Natural killer cell (primary cell): ENCODE measurements at regions of chr2 and their contacts with region 1.

Region 1: GRCh38 chr2:147989809-147990403 is 30.6 kb downstream of the ORC4 start:
- DNase-seq: peak in 1 of 2 donors; percentile 71
- ATAC-seq: peak; percentile 70 to 94 (median 84)
- H3K4me3 ChIP-seq: no peak overlapping the region
- H3K4me3 Mint-ChIP-seq: no peak overlapping the region
- H3K27ac ChIP-seq: no peak overlapping the region
- H3K27ac Mint-ChIP-seq: peak overlapping the region; percentile 48 to 68
- H3K4me1 ChIP-seq: no peaks in the 10 kb centered on the region
- H3K4me1 Mint-ChIP-seq: peaks cover 24 to 42% of the 10 kb centered on the region in 2 donors
- H3K27me3 ChIP-seq: no peaks in the 10 kb centered on the region
- H3K27me3 Mint-ChIP-seq: no peaks in the 10 kb centered on the region
- CTCF ChIP-seq: peak; percentile 67

Region 2: DNA sequence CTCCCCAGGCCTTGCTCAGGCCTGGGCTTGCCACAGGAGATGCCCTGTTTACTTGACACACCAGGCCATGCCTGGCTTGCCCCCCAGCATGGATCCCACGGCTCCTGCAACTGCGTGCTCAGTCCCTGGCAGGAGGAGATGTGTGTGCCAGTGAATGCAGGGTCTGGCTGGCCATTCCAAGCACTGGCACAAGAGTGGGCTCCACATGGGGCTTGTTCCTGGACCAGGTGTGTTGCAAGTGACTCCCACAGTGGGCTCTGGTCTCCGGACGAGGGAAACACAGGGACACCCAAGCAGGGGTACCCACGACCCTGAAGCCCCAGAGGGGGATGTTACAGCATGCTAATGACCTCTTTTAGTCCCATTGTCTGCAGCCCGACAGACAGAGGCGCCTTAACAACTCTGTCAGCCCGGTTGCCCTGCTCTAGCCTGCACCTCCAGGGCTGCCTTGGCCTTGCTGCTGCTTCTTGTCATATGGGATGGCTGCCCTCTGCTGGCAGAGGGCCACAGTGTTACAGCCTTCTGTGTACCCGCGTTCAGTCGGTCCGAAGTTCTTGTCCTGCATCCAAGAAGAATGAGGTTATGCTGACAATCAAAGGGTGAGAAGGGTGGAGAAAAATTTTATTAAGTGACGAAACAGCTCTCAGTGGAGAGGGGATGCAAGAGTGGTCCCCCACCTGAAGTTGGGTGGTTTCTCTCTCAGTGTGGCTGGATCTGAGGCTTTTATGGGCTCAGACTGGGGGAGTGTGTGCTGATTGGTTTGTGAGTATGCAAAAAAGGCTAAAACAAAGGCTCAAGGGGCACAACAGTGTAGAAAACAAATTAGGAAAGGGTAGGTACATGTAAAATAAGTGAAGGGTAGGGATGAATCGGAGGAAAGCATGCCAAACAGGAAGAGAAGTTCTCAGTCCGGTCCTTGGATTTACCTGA is 211.4 kb after region 1 on chr2:
- intact Hi-C with region 1: loop called (anchors 1 kb)
- DNase-seq: peak; percentile 20 to 62
- ATAC-seq: peak; percentile 46 to 70 (median 63)
- H3K4me3 ChIP-seq: no peak overlapping the region
- H3K4me3 Mint-ChIP-seq: no peak overlapping the region
- H3K27ac ChIP-seq: no peak overlapping the region
- H3K27ac Mint-ChIP-seq: no peak overlapping the region
- H3K4me1 ChIP-seq: no peaks in the 10 kb centered on the region
- H3K4me1 Mint-ChIP-seq: peaks cover 0 to 9% of the 10 kb centered on the region in 2 donors
- H3K27me3 ChIP-seq: no peaks in the 10 kb centered on the region
- H3K27me3 Mint-ChIP-seq: no peaks in the 10 kb centered on the region
- CTCF ChIP-seq: no peak

Region 3: DNA sequence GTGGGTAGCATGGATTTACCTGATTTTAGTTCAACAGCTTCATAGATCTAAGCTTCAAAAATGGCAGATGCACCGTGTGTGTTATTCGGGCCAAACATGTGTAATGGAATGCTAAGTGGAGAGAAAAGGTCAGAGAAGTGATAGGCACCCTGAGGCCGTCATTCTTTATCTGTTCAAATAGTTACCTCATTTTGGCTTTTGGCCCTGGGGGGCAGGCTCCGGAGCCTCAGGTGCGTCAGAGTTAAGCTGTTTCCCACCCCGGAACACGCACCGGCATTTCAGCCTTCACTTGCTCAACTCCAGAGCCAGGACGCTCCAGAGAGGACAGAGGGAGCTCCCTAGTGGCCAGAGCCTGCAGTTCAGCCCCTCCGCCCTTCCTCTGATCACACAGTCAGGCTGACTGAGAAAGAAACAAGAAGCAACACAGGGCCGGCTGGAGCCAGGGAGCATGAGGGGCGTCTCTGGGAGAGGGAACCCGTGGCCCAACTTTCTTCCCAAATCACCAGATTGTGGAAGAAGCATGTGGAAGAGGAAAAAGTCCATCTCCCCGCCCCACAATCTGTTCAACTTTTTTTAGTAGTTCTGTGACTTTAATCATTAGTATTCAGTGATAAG is 519.5 kb after region 1 on chr2:
- intact Hi-C with region 1: loop called (anchors 1 kb)
- DNase-seq: peak; percentile 67 to 89
- ATAC-seq: peak; percentile 97 to 100 (median 100)
- H3K4me3 ChIP-seq: peak overlapping the region; percentile 8
- H3K4me3 Mint-ChIP-seq: peak overlapping the region; percentile 49
- H3K27ac ChIP-seq: no peak overlapping the region
- H3K27ac Mint-ChIP-seq: peak overlapping the region in 1 of 2 donors; percentile 51
- H3K4me1 ChIP-seq: peaks cover 5% of the 10 kb centered on the region
- H3K4me1 Mint-ChIP-seq: peaks cover 8 to 10% of the 10 kb centered on the region in 2 donors
- H3K27me3 ChIP-seq: no peaks in the 10 kb centered on the region
- H3K27me3 Mint-ChIP-seq: no peaks in the 10 kb centered on the region
- CTCF ChIP-seq: peak; percentile 78

Region 4: DNA sequence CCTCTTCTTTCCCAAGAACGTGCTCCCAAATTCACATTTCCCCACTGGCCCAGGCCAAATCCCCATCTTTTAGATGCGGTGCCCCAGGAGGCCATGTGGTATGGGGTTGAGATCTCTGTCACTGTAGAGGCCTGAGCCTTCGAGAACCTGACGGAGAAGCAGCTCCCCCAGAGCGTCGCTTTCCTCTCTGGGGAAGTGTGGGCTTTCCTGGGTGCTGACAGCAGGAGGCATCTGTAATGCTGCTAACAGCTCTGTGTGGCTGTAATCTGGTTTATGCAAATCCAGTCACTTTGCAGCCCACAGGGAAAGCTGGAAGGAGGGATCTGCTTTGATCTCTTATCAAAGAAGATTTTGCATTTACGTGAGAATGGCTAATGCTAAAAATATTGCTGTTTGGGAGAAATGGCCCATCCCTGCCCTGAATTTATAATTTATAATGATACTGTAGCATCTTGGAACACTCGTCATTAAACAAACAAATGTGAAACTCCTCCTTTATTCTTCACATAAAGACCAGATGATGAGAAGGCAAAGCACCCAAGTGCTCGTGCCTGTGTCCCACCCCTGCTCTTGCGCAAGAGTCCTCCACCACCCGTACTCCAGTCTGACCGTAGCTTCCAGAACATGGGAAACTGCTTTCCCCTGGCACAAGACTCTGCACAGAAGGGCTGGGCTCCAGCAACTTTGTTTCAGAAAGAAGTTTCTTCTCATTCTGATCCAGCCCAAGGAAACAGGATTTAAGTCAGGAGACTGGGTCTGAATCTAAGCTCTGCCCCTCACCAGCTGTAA is 544.7 kb after region 1 on chr2:
- intact Hi-C with region 1: no loop called
- DNase-seq: no peak
- ATAC-seq: no peak
- H3K4me3 ChIP-seq: no peak overlapping the region
- H3K4me3 Mint-ChIP-seq: no peak overlapping the region
- H3K27ac ChIP-seq: no peak overlapping the region
- H3K27ac Mint-ChIP-seq: no peak overlapping the region
- H3K4me1 ChIP-seq: no peaks in the 10 kb centered on the region
- H3K4me1 Mint-ChIP-seq: peaks cover 0 to 5% of the 10 kb centered on the region in 2 donors
- H3K27me3 ChIP-seq: no peaks in the 10 kb centered on the region
- H3K27me3 Mint-ChIP-seq: peaks cover 0 to 4% of the 10 kb centered on the region in 2 donors
- CTCF ChIP-seq: no peak